Dendritic cell treated with granulocyte-macrophage colony-stimulating factor and Interleukin-4, amounts not matched to agents 40 ng/mL and 50 ng/mL, for 4 days (primary cell): ENCODE measurements at regions of chr11 and their contacts with region 1.

Region 1: DNA sequence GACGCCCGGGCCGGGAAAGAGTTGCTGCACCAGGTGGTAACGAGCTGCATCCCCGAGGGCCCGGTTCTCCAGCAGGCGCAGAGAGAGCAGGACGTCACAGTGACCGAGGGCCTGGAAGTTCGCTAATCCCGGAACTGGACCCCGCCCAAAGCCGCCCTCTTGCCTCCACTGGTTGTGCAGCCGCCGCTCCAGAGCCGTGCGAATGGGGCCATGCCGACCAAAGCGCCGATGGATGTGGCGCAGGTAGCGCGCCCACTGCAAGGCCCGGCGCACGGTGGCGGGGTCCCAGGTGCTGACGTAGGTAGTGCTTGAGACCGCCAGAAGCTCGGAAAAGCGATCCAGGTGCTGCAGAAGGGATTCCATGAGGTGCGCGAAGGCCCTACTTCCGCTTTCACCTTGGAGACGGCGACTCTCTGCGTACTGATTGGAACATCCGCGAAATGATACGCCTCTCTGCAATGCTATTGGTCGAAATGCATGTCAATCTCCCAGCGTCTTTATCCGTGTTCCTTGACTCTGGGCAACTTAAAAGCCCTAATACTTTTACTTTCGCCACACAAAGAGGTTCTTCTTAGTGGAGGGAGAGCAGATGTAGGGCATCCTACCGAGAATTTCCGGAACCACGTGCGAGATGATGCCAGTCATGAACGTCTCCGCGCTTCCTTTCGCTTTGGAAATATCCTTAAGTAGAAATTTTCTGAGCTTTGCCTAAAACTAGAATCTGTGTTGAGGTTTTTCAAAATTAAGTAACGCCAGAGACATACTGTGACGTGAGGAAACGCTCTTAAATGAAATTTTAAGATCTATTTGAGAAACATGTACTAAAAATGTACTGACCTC is at the start of gene FANCF:
- H3K4me3 Mint-ChIP-seq: peak within 1 kb of the TSS; percentile 98
- H3K27ac Mint-ChIP-seq: peak within 1 kb of the TSS; percentile 98
- H3K4me1 Mint-ChIP-seq: peaks cover 13% of the 10 kb centered on the region
- H3K27me3 Mint-ChIP-seq: no peaks in the 10 kb centered on the region

Region 2: DNA sequence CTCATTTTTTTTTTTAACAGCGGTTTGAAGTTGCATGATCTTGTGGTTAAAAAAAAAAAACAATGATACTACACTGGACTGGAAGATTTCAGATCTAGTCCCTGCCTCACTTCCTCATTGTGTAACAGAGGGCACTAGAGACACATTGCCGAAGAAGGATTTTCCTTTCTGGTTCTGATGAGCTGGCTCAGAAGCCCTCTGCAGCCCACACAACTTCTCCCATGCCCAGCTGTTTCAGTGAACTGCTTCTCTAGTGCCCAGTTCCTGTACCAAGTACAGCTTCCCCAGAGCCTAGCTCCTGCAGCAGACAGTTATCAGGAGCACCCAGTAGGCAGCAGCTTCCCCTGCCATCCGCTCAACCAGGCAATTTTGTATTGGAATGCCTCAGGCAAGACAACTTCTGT is 462.3 kb before region 1 on chr11:
- intact Hi-C with region 1: loop called (anchors 5 kb)
- H3K4me3 Mint-ChIP-seq: peak overlapping the region; percentile 5
- H3K27ac Mint-ChIP-seq: peak overlapping the region; percentile 82
- H3K4me1 Mint-ChIP-seq: peaks cover 30% of the 10 kb centered on the region
- H3K27me3 Mint-ChIP-seq: no peaks in the 10 kb centered on the region

Region 3: GRCh38 chr11:22829231-22830081 is 203.8 kb after region 1 on chr11 and contains the start of gene SVIP:
- intact Hi-C with region 1: loop called (anchors 5 kb)
- H3K4me3 Mint-ChIP-seq: peak within 1 kb of the TSS; percentile 81
- H3K27ac Mint-ChIP-seq: peak within 1 kb of the TSS; percentile 75
- H3K4me1 Mint-ChIP-seq: peaks cover 5% of the 10 kb centered on the region
- H3K27me3 Mint-ChIP-seq: peaks cover 2% of the 10 kb centered on the region